Activated naive CD4-positive, alpha-beta T cell treated with anti-CD3 and anti-CD28 coated beads for 36 hours (primary cell): ENCODE measurements at regions of chr2 and their contacts with region 1.

Region 1: GRCh38 chr2:237998530-237998929 is 31.7 kb downstream of the UBE2F start:
- DNase-seq: peak; percentile 76
- H3K4me3 Mint-ChIP-seq: peak overlapping the region; percentile 50
- H3K27ac Mint-ChIP-seq: peak overlapping the region; percentile 95
- H3K4me1 Mint-ChIP-seq: peaks cover 64% of the 10 kb centered on the region
- H3K27me3 Mint-ChIP-seq: no peaks in the 10 kb centered on the region

Region 2: DNA sequence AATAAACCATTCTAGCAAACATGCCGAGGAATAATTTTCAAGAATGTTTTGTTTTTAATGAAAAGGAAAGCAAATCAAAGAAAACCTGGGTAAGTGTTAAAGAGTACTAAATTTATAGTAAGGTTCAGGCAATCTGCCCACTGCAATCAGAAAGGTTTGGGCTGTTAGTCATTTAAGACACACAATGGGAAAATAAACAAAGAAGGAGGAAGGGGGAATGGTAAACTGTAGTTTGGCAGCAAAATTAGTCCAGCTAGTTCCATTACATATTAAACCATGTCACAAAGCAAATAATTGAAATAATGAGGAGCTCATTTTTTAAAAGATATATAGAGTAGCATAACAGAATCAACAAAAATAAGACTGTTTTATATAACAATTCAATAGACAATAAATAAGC is 1000.3 kb before region 1 on chr2:
- CTCF ChIA-PET with region 1: no interaction called
- intact Hi-C with region 1: no loop called
- DNase-seq: no peak
- H3K4me3 Mint-ChIP-seq: no peak overlapping the region
- H3K27ac Mint-ChIP-seq: no peak overlapping the region
- H3K4me1 Mint-ChIP-seq: no peaks in the 10 kb centered on the region
- H3K27me3 Mint-ChIP-seq: peaks cover 6% of the 10 kb centered on the region

Region 3: DNA sequence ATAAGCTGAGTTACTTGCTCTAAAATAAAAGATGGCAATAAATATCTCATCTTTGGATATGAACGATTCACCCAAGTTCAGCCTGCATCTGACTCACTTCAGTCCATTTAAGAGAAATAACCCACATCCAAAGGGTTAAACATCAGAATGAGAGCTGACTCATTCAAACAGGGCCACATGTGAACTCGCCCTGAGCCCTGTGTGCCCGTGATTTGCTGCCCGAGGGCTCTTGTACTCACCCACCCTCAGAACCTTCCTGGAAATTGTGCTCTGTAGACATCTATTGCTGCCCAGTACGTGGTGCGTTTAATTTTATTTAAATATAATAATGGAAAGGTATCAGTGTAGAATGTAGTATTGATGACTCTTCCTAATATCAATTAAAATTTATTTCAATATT is 266.9 kb before region 1 on chr2:
- CTCF ChIA-PET with region 1: no interaction called
- intact Hi-C with region 1: loop called (anchors 1 kb)
- DNase-seq: peak; percentile 66
- H3K4me3 Mint-ChIP-seq: no peak overlapping the region
- H3K27ac Mint-ChIP-seq: peak overlapping the region; percentile 17
- H3K4me1 Mint-ChIP-seq: peaks cover 46% of the 10 kb centered on the region
- H3K27me3 Mint-ChIP-seq: no peaks in the 10 kb centered on the region

Region 4: DNA sequence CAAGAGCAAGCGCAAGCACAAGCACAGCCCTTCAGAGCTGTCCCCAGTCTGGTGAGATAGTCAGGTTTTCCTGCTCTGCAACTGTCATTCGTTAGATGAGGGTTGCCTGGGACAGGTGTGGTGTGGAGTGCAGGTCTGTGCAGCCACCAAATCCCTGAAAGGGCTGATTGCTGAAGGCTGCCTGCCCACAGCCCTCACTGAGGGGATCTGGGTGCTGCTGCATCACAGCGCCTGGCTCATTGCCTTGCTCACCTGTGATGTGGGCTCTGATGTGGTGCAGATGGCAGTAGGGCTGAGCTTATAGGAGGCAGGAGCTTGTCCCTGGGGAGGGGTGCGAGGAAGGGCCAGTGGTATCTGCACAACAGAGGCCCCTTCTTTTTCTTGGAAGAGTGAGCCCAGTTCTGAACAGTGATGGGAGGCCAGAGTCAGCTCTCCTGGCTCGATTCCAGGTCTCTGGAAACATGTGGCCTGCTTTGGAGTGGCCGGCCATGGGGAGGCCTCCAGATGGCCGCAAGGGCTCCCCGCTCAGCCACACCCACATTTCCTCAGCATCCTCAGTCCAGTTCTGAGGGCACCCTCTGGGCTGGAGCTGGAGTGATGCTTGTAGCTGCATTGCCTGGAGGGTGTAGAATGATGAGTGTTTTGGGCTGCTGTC is 20.3 kb before region 1 on chr2:
- CTCF ChIA-PET with region 1: interaction called, 4 read pairs
- intact Hi-C with region 1: loop called (anchors 1 kb)
- DNase-seq: no peak
- H3K4me3 Mint-ChIP-seq: no peak overlapping the region
- H3K27ac Mint-ChIP-seq: no peak overlapping the region
- H3K4me1 Mint-ChIP-seq: peaks cover 46% of the 10 kb centered on the region
- H3K27me3 Mint-ChIP-seq: no peaks in the 10 kb centered on the region

Region 5: DNA sequence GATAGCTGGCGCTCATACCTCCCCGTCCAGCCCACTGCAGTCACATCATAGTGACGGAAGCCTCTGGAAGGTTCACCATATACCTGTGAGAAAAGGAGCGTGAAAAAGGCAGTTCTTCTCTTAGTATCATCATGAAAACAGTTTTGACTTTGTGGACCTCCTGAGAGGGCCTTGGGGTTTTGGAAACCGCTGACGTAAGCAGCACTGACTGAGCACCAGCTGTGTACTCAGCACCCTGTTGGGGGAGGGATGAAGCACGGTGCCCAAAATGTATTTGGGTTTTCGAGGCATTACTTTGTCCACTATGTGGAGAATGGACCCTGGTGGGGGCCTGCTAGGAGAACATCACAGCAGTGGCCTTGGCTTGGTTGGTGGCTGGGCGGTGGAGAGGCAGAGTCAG is 67.7 kb after region 1 on chr2:
- CTCF ChIA-PET with region 1: interaction called, 3 read pairs
- intact Hi-C with region 1: loop called (anchors 1 kb)
- DNase-seq: no peak
- H3K4me3 Mint-ChIP-seq: no peak overlapping the region
- H3K27ac Mint-ChIP-seq: peak overlapping the region; percentile 89
- H3K4me1 Mint-ChIP-seq: peaks cover 76% of the 10 kb centered on the region
- H3K27me3 Mint-ChIP-seq: no peaks in the 10 kb centered on the region

Region 6: GRCh38 chr2:238438856-238439849 is 440.6 kb after region 1 on chr2:
- CTCF ChIA-PET with region 1: no interaction called
- intact Hi-C with region 1: loop called (anchors 1 kb)
- DNase-seq: peak; percentile 85
- H3K4me3 Mint-ChIP-seq: peak overlapping the region; percentile 11
- H3K27ac Mint-ChIP-seq: peak overlapping the region; percentile 43
- H3K4me1 Mint-ChIP-seq: peaks cover 48% of the 10 kb centered on the region
- H3K27me3 Mint-ChIP-seq: no peaks in the 10 kb centered on the region